ENCODE measurements at regions of chr16 and their contacts with region 1.

Region 1: DNA sequence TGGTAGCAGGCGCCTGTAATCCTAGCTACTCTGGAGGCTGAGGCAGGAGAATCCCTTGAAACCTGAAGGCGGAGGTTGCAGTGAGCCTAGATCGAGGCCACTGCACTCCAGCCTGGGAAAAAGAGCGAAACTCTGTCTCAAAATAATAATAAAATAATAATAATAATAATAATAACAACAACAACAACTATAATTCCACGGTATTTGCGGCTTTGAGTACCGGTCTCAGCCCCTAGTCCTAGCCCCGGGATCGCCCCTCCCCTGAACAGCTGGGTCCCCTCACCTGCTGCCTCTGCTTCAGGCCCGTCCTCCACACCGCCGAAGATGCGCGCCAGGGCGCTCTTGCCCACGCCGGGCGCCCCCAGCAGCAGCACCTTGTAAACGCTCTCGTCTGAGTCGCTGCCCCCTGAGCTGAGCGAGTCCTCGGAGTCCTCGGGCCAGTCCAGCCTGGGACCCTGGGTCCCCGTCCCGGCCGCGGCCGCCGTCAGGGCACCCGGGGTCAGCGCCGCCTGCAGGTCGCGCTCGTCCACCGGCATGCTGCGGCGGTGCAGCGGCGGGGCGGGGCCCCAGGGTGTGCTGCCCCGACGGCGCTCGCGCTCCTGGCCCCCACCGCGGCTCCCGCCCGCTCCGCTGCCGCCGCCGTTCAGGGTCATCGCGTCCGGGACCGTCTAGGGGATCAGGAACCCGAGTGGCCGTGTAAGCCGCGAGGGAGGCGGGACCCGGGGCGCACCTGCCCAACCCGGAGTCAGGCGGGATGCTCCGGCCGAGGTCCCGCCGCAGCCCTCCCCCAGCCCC is 611 bp downstream of the RRAD start:
- DNase-seq: peak in 4 of 5 donors; percentile 57 to 75 (median 70)
- ATAC-seq: peak in 2 of 4 donors; percentile 1 to 25
- H3K4me3 ChIP-seq: peak overlapping the region; percentile 48 to 94 (median 68)
- H3K27ac ChIP-seq: peak overlapping the region; percentile 80 to 99 (median 93)
- H3K4me1 ChIP-seq: peaks cover 0 to 70% (median 32%) of the 10 kb centered on the region in 12 donors
- H3K27me3 ChIP-seq: peaks cover 0 to 39% (median 0%) of the 10 kb centered on the region in 9 donors
- CTCF ChIP-seq: peak in 9 of 12 donors; percentile 14 to 52 (median 39)
- POLR2A ChIP-seq: no peak

Region 2: GRCh38 chr16:65876056-65876408 is 1048.7 kb before region 1 on chr16:
- intact Hi-C with region 1: no loop called
- DNase-seq: no peak
- ATAC-seq: no peak
- H3K4me3 ChIP-seq: no peak overlapping the region
- H3K27ac ChIP-seq: no peak overlapping the region
- H3K4me1 ChIP-seq: no peaks in the 10 kb centered on the region
- H3K27me3 ChIP-seq: no peaks in the 10 kb centered on the region
- CTCF ChIP-seq: no peak
- POLR2A ChIP-seq: no peak

Region 3: DNA sequence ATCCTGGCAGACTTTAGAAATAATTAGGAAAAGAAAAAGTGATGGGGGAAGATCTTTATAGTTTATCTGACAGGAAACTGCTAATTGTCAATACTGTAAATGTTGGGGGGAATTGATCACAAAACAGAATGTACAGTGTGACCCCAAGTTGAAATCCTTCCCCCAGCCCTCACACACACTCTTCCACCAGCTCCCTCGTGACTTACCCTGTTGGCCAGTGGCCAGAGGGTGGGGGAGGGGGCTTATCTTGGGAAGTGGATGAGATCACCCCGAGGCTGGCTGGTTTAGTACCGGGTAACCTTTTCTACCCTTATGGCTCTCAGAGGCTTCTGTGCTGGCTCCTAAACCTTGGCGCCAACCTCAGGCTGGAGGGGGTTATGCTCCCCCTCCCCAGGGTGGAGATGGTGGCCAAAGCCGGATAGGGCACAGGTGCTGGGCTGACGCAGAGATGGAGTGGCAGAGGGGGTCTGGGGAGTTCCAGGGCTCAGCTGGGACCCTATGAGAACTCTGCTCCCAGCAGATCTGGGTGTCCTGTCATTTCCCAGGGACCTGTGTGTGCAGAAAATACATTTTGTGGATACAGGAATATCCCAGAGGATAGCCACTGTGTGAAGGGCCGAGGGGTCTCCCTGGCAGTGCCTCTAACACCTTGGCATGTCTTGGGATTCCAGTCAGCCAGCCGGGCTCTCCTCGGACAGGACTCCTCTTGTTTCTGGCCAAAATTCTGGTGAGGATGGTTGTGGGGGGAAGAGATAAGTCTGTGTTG is 24.6 kb before region 1 on chr16:
- intact Hi-C with region 1: loop called in 7 of 10 experiments (anchors 1 to 2 kb)
- DNase-seq: peak; percentile 77 to 89 (median 81)
- ATAC-seq: peak in 3 of 4 donors; percentile 5 to 30 (median 25)
- H3K4me3 ChIP-seq: peak overlapping the region in 1 of 12 donors; percentile 3
- H3K27ac ChIP-seq: peak overlapping the region; percentile 78 to 100 (median 96)
- H3K4me1 ChIP-seq: peaks cover 0 to 71% (median 43%) of the 10 kb centered on the region in 12 donors
- H3K27me3 ChIP-seq: no peaks in the 10 kb centered on the region
- CTCF ChIP-seq: no peak
- POLR2A ChIP-seq: no peak